PC-3 (cell line): ENCODE measurements at regions of chr2 and their contacts with region 1.

Region 1: DNA sequence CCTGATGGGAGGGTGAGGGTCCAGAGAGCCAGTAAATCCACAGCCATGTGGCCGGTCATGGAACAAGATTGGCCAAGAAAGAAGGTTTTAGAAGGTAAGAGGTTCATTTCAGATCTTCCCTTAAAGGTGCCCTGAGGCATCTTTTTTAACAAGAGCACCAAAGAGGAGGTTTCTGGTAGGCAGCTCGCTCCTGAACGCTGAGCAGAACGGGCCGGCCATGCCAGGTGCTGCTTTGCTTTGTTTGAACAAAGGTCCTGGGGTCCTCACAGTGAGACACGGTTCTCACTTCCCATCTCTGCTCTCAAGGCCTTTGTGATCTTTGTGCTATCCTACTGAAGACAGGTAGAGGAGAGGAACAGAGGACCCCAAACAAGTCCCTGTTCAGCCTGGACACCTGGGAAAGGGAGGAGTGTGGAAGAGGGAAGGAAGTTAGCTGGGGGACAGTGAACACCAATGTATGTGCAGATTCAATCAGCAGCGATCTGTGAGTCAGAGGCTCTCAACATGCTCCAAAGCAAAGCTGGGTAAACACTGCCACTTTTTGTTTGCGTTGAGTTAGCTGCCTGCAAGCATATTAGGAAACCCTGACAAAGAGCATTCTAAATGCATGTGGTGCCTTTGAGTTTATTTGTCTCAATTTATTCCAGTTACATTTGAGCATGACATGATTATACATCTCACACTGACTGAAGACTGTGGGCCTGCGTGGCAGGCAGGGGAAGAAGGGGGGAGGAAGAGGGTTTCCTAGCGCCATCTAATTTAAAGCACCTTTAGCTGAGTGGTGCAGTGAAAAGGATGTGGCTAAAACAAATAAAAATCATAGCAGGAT is 102.4 kb downstream of the ASB1 start:
- DNase-seq: peak; percentile 91
- ATAC-seq: peak; percentile 98
- H3K4me3 ChIP-seq: peak overlapping the region; percentile 17; the same call in 1 of the 2 replicates
- H3K27ac ChIP-seq: peak overlapping the region; percentile 72
- H3K4me1 ChIP-seq: peaks cover 15% of the 10 kb centered on the region
- H3K27me3 ChIP-seq: no peaks in the 10 kb centered on the region
- CTCF ChIP-seq: 0 out of 2 replicates have a peak, but pooled peaks have one; percentile 25

Region 2: DNA sequence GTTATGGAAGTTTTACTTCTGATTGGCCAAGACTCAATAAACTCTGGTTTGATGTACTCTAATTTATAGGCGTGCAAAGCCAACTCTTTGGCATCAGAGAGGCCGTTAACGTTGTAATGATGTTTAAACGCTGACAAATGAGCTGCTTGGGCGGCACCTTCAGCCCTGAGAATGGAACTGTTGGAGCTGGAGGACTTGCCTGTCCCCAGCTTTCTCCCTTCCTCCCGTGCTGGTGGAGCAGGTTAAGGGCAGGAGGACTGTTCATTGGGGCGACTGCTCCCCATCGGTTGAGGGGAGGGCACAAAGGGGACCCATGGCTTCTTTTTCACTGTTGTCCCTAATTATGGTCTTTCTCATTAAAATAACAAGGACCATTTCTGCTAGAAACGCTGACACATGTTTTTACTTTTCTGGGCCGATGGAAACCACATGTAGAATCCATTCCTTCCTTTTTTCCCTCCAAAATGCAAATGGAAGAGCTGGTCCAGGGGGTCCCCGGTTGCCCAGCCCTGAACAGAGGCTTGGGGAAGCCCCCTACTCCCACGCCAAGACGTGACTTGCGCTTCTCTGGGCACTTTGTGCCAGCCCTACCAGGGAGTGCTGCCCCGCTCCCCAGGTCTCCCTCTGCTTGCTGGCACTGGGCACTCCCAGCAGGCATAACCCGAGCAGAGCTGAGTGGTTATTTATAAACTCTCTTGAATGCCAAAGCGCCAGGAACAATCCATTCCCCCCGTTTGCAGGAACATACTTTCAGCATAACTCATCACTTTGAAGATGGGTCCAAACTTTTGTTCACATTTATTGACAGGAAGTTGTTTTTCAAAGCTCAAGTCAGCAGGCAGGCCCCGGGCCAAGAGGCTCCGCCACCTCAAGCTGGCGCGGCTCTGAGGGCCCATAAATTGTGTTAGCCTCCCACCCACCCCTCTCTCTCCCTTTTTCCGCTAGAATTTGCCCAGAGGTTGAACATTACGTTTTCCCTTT is 67.7 kb after region 1 on chr2:
- CTCF ChIA-PET with region 1: no interaction called
- POLR2A ChIA-PET with region 1: interaction called, 5 read pairs
- intact Hi-C with region 1: loop called (anchors 2 kb)
- DNase-seq: peak; percentile 94
- ATAC-seq: peak; percentile 98
- H3K4me3 ChIP-seq: no peak overlapping the region; the same call in 1 of the 2 replicates
- H3K27ac ChIP-seq: peak overlapping the region; percentile 55
- H3K4me1 ChIP-seq: peaks cover 18% of the 10 kb centered on the region
- H3K27me3 ChIP-seq: no peaks in the 10 kb centered on the region
- CTCF ChIP-seq: no peak